HCT116 (cell line): ENCODE measurements at regions of chr14 and their contacts with region 1.

Region 1: GRCh38 chr14:32469388-32470160 is 140.5 kb downstream of the AKAP6 start:
- DNase-seq: peak; percentile 26
- ATAC-seq: no peak; the same call in 1 of the 2 replicates
- H3K4me3 ChIP-seq: no peak overlapping the region
- H3K27ac ChIP-seq: no peak overlapping the region
- H3K4me1 ChIP-seq: no peaks in the 10 kb centered on the region
- H3K27me3 ChIP-seq: no peaks in the 10 kb centered on the region
- CTCF ChIP-seq: peak; percentile 20 to 64 (median 42); a peak in 5 of 6 replicates
- POLR2A ChIP-seq: no peak
- RAD21 ChIP-seq: peak; percentile 64

Region 2: GRCh38 chr14:31510222-31510621 is 959.4 kb before region 1 on chr14:
- CTCF ChIA-PET with region 1: interaction called, 7 read pairs
- POLR2A ChIA-PET with region 1: no interaction called
- RAD21 ChIA-PET with region 1: no interaction called
- intact Hi-C with region 1: loop called (anchors 2 kb)
- DNase-seq: peak; percentile 27
- ATAC-seq: peak; percentile 55
- H3K4me3 ChIP-seq: no peak overlapping the region
- H3K27ac ChIP-seq: no peak overlapping the region
- H3K4me1 ChIP-seq: no peaks in the 10 kb centered on the region
- H3K27me3 ChIP-seq: no peaks in the 10 kb centered on the region
- CTCF ChIP-seq: peak; percentile 27 to 80 (median 67); a peak in 5 of 6 replicates
- POLR2A ChIP-seq: no peak
- RAD21 ChIP-seq: peak; percentile 76

Region 3: DNA sequence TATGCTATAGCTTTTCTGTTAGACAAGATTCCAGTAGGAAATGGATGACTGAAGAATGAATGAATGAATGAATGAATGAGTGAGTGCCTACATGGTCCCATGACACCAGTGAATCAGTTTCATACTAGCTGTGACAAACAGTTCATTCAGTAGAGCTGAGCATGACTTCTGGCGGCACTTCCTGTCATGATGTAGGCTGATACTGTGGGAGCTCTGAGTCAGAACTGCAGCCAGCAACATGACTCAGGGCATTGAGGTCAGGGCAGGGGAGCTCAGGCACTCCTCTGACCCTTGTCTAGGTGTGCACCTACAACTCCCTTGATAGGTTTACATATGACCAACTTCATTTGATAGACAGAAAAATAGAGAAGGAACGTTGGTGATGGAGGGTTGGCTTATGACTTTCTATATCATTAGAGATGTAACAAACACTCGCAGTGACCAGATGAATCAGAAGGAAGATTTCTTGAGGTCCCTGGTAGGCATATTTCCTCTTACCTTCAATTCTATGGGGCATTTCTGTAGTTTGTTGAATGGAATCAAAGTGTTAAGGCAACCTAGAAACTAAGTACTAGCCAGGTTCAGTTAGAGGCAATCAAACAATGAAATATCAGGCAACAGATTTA is 531.7 kb before region 1 on chr14:
- CTCF ChIA-PET with region 1: interaction called, 6 read pairs
- POLR2A ChIA-PET with region 1: no interaction called
- RAD21 ChIA-PET with region 1: no interaction called
- intact Hi-C with region 1: loop called (anchors 1 kb)
- DNase-seq: peak; percentile 91
- ATAC-seq: peak; percentile 91
- H3K4me3 ChIP-seq: no peak overlapping the region
- H3K27ac ChIP-seq: no peak overlapping the region
- H3K4me1 ChIP-seq: peaks cover 30 to 50% of the 10 kb centered on the region in 2 experiments
- H3K27me3 ChIP-seq: no peaks in the 10 kb centered on the region
- CTCF ChIP-seq: no peak
- POLR2A ChIP-seq: no peak
- RAD21 ChIP-seq: peak; percentile 13; the same call in 1 of the 2 replicates

Region 4: DNA sequence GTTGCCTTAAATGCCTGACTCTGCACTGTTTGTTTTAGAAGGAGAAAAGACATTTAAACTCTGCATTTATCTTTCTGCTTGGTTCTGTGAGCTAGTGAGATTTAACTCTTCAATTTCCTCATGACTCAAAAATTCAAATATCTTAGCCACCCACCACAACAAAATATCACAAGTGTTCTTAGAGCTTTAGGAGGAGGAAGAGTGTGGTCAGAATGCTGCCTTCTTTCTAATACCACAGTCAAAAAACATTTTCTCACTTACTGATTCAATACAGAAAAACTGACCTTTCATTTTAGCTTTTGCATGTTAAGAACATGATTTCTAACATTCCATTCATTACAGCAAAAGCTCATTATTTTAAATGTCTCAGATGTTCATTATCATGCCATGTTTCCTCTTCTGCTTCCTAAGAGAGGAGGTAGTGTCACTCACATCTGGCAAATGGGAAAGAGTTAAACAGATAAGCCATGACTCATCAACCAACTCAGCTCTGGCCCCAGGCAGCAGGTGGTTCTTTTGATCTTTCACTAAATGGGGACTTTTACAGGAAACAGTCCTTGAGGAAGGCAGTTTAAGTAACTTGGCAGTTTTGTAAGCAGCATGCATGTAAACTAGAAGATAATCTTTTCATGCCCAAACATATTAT is 210.1 kb before region 1 on chr14:
- CTCF ChIA-PET with region 1: interaction called, 29 read pairs
- POLR2A ChIA-PET with region 1: no interaction called
- RAD21 ChIA-PET with region 1: interaction called, 3 read pairs
- intact Hi-C with region 1: loop called (anchors 1 kb)
- DNase-seq: peak; percentile 56
- ATAC-seq: peak; percentile 66
- H3K4me3 ChIP-seq: no peak overlapping the region
- H3K27ac ChIP-seq: no peak overlapping the region
- H3K4me1 ChIP-seq: peaks cover 11 to 21% of the 10 kb centered on the region in 2 experiments; a peak in 3 of 4 replicates
- H3K27me3 ChIP-seq: no peaks in the 10 kb centered on the region
- CTCF ChIP-seq: no peak
- POLR2A ChIP-seq: no peak
- RAD21 ChIP-seq: peak; percentile 12; the same call in 1 of the 2 replicates